A673 (cell line): ENCODE measurements at regions of chr15 and their contacts with region 1.

Region 1: GRCh38 chr15:92714477-92715401 is 59.2 kb upstream of the FAM174B start:
- DNase-seq: peak; percentile 87
- H3K4me3 ChIP-seq: peak overlapping the region; percentile 58
- H3K27ac ChIP-seq: peak overlapping the region; percentile 55
- H3K4me1 ChIP-seq: peaks cover 16% of the 10 kb centered on the region
- H3K27me3 ChIP-seq: no peaks in the 10 kb centered on the region
- CTCF ChIP-seq: peak; percentile 94

Region 2: GRCh38 chr15:91055548-91056331 is 1659.0 kb before region 1 on chr15:
- CTCF ChIA-PET with region 1: no interaction called
- POLR2A ChIA-PET with region 1: no interaction called
- intact Hi-C with region 1: no loop called
- DNase-seq: peak; percentile 89
- H3K4me3 ChIP-seq: no peak overlapping the region
- H3K27ac ChIP-seq: no peak overlapping the region
- H3K4me1 ChIP-seq: peaks cover 11% of the 10 kb centered on the region
- H3K27me3 ChIP-seq: no peaks in the 10 kb centered on the region
- CTCF ChIP-seq: peak; percentile 85

Region 3: GRCh38 chr15:92097474-92098178 is 617.1 kb before region 1 on chr15:
- CTCF ChIA-PET with region 1: interaction called, 7 read pairs
- POLR2A ChIA-PET with region 1: no interaction called
- intact Hi-C with region 1: loop called (anchors 2 kb)
- DNase-seq: peak; percentile 75
- H3K4me3 ChIP-seq: no peak overlapping the region
- H3K27ac ChIP-seq: no peak overlapping the region
- H3K4me1 ChIP-seq: no peaks in the 10 kb centered on the region
- H3K27me3 ChIP-seq: no peaks in the 10 kb centered on the region
- CTCF ChIP-seq: peak; percentile 88

Region 4: DNA sequence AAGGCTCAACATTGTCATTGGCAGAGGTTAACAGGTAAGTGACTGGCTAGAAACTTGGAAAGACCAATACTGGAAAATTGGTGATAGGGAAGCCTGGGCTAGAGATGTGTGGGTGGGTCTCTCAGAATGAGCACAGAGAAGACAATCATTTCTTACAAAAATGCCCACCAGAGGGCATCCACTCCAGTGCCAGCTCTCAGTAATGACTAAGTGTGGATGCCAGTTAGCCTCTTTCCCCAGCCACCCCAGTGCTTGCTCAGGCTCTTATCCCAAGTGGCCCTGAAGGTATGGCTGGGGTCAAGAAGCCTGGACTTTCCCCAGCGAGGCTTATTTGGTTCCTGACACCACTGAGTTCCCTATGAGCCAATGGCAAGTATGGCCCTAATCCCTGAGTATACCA is 437.0 kb before region 1 on chr15:
- CTCF ChIA-PET with region 1: interaction called, 8 read pairs
- POLR2A ChIA-PET with region 1: no interaction called
- intact Hi-C with region 1: loop called (anchors 1 kb)
- DNase-seq: peak; percentile 52
- H3K4me3 ChIP-seq: no peak overlapping the region
- H3K27ac ChIP-seq: no peak overlapping the region
- H3K4me1 ChIP-seq: no peaks in the 10 kb centered on the region
- H3K27me3 ChIP-seq: no peaks in the 10 kb centered on the region
- CTCF ChIP-seq: peak; percentile 58

Region 5: GRCh38 chr15:92391640-92392039 is 323.1 kb before region 1 on chr15:
- CTCF ChIA-PET with region 1: interaction called, 12 read pairs
- POLR2A ChIA-PET with region 1: no interaction called
- intact Hi-C with region 1: loop called (anchors 5 kb)
- DNase-seq: peak; percentile 47
- H3K4me3 ChIP-seq: no peak overlapping the region
- H3K27ac ChIP-seq: no peak overlapping the region
- H3K4me1 ChIP-seq: no peaks in the 10 kb centered on the region
- H3K27me3 ChIP-seq: peaks cover 97% of the 10 kb centered on the region
- CTCF ChIP-seq: peak; percentile 49

Region 6: GRCh38 chr15:92521624-92522008 is 193.1 kb before region 1 on chr15:
- CTCF ChIA-PET with region 1: interaction called, 21 read pairs
- POLR2A ChIA-PET with region 1: no interaction called
- intact Hi-C with region 1: loop called (anchors 1 kb)
- DNase-seq: peak; percentile 83
- H3K4me3 ChIP-seq: no peak overlapping the region
- H3K27ac ChIP-seq: no peak overlapping the region
- H3K4me1 ChIP-seq: no peaks in the 10 kb centered on the region
- H3K27me3 ChIP-seq: no peaks in the 10 kb centered on the region
- CTCF ChIP-seq: peak; percentile 65